Left cardiac atrium (tissue), 4 donors: ENCODE measurements at regions of chr13 and their contacts with region 1.

Region 1: GRCh38 chr13:41075034-41075433 is 13.7 kb downstream of the WBP4 start:
- DNase-seq: no peak
- ATAC-seq: peak in 1 of 2 donors; percentile 47

Region 2: DNA sequence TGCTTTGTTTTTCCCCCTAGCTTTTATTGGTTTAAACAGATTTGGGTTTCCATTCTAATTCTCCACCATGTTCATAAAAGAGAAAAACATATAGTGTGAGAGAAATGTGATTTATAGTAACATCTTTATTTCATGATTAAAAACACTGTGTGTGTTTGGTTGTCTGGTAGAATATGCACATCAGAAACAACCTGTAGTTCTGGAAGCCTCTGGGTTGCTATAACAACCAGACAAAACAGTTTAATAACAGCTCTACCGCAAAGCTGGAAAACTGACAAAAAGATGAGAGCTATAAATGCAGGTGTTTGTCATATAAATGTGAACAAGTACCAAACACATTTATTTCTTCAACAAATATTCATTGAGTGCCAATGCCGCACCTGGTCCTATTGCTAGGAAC is 47.8 kb after region 1 on chr13:
- intact Hi-C with region 1: loop called in 1 of 2 experiments (anchors 10 kb)
- DNase-seq: no peak
- ATAC-seq: no peak

Region 3: GRCh38 chr13:41222259-41222852 is 147.3 kb after region 1 on chr13:
- intact Hi-C with region 1: loop called (anchors 2 to 5 kb)
- DNase-seq: no peak
- ATAC-seq: peak; percentile 73 to 85